PC-9 (cell line): ENCODE measurements at regions of chr1 and their contacts with region 1.

Region 1: DNA sequence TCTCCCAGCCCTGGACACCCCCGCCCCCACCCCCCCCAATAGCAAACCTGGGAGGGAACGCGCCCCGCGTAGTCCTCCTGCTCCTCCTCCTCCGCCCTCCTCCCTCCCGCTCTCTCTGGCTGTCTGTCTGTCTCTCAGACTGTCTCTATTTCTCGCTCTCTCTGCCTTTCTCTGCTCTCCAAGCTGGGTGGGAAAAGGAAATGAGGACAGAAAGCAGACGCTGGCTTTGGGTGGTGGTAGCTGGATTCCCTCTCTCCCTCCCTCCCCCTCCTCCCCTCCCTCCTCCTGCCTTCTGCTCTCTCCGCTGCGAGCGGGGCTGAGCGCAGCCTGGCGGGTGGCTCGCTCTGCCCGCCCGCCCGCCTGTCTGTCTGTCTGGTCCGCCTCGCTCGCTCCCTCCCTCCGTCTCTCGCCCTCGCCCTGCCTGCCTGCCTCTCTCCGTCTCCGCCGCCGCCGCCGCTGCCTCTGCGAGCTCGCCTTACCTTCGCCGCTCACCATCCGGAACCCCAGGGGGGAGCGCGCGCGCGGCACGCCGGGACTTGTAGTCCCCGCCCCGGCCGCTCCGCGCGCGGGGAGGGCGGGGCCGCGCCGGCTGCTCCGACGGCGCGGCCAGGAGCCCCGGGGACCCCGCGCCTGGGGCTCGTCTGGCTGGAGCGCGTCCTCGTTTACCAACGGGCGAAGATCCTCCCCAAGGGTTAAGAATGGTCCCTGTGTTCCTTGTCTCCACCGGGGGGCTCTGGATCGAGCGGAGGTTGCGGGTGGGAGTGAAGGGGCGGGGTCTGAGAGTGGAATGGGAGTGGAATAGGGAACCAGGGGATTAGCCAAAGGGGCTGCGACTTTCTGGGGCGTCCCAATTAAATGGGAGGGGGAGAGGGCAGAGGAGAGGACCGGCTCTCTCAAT is at the start of gene AHDC1:
- DNase-seq: peak; percentile 65 to 88
- H3K4me3 ChIP-seq: peak within 1 kb of the TSS; percentile 71
- H3K27ac ChIP-seq: no peak within 1 kb of the TSS
- H3K4me1 ChIP-seq: peaks cover 13% of the 10 kb centered on the region
- H3K27me3 ChIP-seq: no peaks in the 10 kb centered on the region
- CTCF ChIP-seq: no peak
- total RNA-seq, gene AHDC1: 45.9 and 48.8 TPM in 2 replicates

Region 2: GRCh38 chr1:27292106-27292505 is 311.8 kb before region 1 on chr1:
- CTCF ChIA-PET with region 1: interaction called, 12 read pairs
- POLR2A ChIA-PET with region 1: no interaction called
- intact Hi-C with region 1: no loop called
- DNase-seq: no peak
- H3K4me3 ChIP-seq: no peak overlapping the region
- H3K27ac ChIP-seq: no peak overlapping the region
- H3K4me1 ChIP-seq: no peaks in the 10 kb centered on the region
- H3K27me3 ChIP-seq: no peaks in the 10 kb centered on the region
- CTCF ChIP-seq: no peak

Region 3: GRCh38 chr1:27402349-27402754 is 201.6 kb before region 1 on chr1:
- CTCF ChIA-PET with region 1: no interaction called
- POLR2A ChIA-PET with region 1: interaction called, 12 read pairs
- intact Hi-C with region 1: loop called (anchors 2 kb)
- DNase-seq: peak in 1 of 2 experiments; percentile 48
- H3K4me3 ChIP-seq: no peak overlapping the region
- H3K27ac ChIP-seq: no peak overlapping the region
- H3K4me1 ChIP-seq: no peaks in the 10 kb centered on the region
- H3K27me3 ChIP-seq: no peaks in the 10 kb centered on the region
- CTCF ChIP-seq: no peak; the same call in 1 of the 2 replicates

Region 4: DNA sequence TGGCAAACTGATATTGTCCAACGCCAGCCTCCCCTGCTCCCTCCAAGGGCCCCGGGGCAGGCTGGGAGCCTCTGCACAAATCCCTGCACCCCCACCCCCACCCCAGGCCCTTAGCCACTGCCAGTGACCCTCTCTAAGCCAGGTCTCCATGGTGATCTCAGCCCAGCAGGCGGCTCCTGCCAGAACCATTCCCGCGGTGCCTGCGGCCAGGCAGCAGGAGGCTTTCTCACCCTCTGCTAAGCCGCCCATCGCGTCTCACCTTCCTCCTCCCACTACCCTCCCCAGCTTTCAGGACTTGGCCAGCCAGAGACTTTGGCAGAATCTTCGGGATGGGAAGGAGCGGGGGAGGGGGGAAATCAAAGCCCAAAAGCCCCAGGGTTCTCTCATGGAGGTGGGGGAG is 67.2 kb before region 1 on chr1:
- CTCF ChIA-PET with region 1: interaction called, 3 read pairs
- POLR2A ChIA-PET with region 1: interaction called, 10 read pairs
- intact Hi-C with region 1: no loop called
- DNase-seq: peak in 1 of 2 experiments; percentile 35
- H3K4me3 ChIP-seq: no peak overlapping the region
- H3K27ac ChIP-seq: no peak overlapping the region
- H3K4me1 ChIP-seq: peaks cover 47% of the 10 kb centered on the region
- H3K27me3 ChIP-seq: no peaks in the 10 kb centered on the region
- CTCF ChIP-seq: no peak

Region 5: DNA sequence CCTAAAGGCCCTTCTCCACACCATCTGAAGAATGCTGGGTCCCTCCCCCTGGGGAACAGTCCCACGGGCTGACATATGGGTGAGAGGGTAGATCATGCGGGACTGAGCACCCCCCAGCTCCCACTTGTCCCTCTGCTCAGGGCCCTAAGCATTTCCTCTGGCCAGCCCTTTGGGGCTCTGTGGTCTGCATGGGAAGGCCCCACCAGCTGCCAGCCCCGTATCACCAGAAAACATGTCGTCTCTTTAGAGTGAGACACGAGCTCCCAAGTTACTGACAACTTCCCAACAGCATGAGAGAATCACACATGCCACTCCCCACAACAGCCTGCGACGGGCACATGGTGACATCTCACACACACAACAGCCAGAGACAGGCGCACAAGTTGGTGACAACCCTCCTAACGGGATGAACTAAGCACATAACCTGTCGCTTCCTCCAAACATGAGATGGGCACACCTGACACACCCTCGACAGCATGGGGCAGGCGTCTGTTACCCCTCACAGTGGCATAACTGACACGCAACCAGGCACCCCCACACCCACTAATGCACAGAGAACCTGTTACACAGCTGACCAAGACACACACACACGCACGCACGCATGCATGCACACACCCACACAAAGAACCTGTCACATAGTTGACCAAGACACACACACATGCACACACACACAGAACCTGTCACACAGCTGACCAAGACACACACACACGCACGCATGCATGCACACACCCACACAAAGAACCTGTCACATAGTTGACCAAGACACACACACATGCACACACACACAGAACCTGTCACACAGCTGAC is 41.2 kb before region 1 on chr1:
- CTCF ChIA-PET with region 1: interaction called, 37 read pairs
- POLR2A ChIA-PET with region 1: no interaction called
- intact Hi-C with region 1: loop called (anchors 1 kb)
- DNase-seq: no peak
- H3K4me3 ChIP-seq: no peak overlapping the region
- H3K27ac ChIP-seq: no peak overlapping the region
- H3K4me1 ChIP-seq: peaks cover 43% of the 10 kb centered on the region
- H3K27me3 ChIP-seq: no peaks in the 10 kb centered on the region
- CTCF ChIP-seq: no peak

Region 6: GRCh38 chr1:27662707-27663393 is 58.9 kb after region 1 on chr1:
- CTCF ChIA-PET with region 1: interaction called, 13 read pairs
- POLR2A ChIA-PET with region 1: no interaction called
- intact Hi-C with region 1: loop called (anchors 1 kb)
- DNase-seq: peak; percentile 53 to 78
- H3K4me3 ChIP-seq: no peak overlapping the region
- H3K27ac ChIP-seq: no peak overlapping the region
- H3K4me1 ChIP-seq: peaks cover 9% of the 10 kb centered on the region; the same call in 1 of the 2 replicates
- H3K27me3 ChIP-seq: no peaks in the 10 kb centered on the region
- CTCF ChIP-seq: peak; percentile 84

Region 7: DNA sequence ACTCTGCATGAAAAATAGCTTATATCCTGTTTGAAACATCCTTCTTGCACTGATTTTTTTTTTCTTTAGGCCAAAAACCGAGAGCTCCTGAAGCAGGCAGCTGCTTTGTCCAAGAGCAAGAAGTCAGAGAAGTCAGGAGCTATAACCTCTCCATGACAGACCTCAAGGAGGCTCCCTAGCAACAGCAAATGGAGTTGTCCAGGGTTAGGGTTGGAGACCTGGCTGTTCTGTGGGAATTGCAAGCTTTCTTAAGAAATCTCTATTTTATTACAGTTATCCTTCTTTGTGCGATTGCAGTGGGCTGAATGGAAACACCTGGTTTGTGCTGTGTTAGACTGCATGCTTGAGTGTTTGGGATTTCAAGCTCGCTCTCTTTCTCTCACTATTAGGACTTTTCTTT is 156.5 kb after region 1 on chr1:
- CTCF ChIA-PET with region 1: no interaction called
- POLR2A ChIA-PET with region 1: interaction called, 19 read pairs
- intact Hi-C with region 1: no loop called
- DNase-seq: no peak
- H3K4me3 ChIP-seq: no peak overlapping the region
- H3K27ac ChIP-seq: no peak overlapping the region
- H3K4me1 ChIP-seq: no peaks in the 10 kb centered on the region
- H3K27me3 ChIP-seq: no peaks in the 10 kb centered on the region
- CTCF ChIP-seq: no peak

Region 8: GRCh38 chr1:27821761-27822315 is 217.9 kb after region 1 on chr1:
- CTCF ChIA-PET with region 1: no interaction called
- POLR2A ChIA-PET with region 1: no interaction called
- intact Hi-C with region 1: no loop called
- DNase-seq: no peak
- H3K4me3 ChIP-seq: no peak overlapping the region
- H3K27ac ChIP-seq: no peak overlapping the region
- H3K4me1 ChIP-seq: no peaks in the 10 kb centered on the region
- H3K27me3 ChIP-seq: no peaks in the 10 kb centered on the region
- CTCF ChIP-seq: no peak